ENCODE measurements at regions of chr18 and their contacts with region 1.

Region 1: GRCh38 chr18:44568343-44568742 is 112.3 kb upstream of the SETBP1 start:
- DNase-seq: no peak
- H3K27ac ChIP-seq: peak overlapping the region; percentile 57
- CTCF ChIP-seq: no peak

Region 2: GRCh38 chr18:44258576-44258975 is 309.8 kb before region 1 on chr18:
- CTCF ChIA-PET with region 1: no interaction called
- POLR2A ChIA-PET with region 1: no interaction called
- DNase-seq: no peak
- H3K27ac ChIP-seq: no peak overlapping the region
- CTCF ChIP-seq: no peak

Region 3: DNA sequence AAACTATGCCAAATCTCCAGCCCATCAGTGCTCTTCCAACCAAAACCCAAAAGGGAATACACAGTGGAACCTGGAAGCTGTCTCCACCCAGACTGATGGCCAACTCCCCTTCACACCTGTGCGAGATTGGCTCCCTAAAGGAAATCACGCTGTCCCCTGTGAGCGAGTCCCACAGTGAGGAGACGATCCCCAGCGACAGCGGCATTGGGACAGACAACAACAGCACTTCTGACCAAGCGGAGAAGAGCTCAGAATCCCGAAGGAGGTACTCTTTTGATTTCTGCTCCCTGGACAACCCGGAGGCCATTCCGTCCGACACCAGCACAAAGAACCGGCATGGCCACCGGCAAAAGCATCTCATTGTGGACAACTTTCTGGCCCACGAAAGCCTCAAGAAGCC is 383.4 kb after region 1 on chr18:
- CTCF ChIA-PET with region 1: interaction called, 14 read pairs
- POLR2A ChIA-PET with region 1: no interaction called
- DNase-seq: no peak
- H3K27ac ChIP-seq: no peak overlapping the region
- CTCF ChIP-seq: no peak

Region 4: GRCh38 chr18:45488645-45489044 is 920.3 kb after region 1 on chr18:
- CTCF ChIA-PET with region 1: no interaction called
- POLR2A ChIA-PET with region 1: no interaction called
- DNase-seq: no peak
- H3K27ac ChIP-seq: no peak overlapping the region
- CTCF ChIP-seq: no peak